ENCODE measurements at regions of chr6 and their contacts with region 1.

Region 1: DNA sequence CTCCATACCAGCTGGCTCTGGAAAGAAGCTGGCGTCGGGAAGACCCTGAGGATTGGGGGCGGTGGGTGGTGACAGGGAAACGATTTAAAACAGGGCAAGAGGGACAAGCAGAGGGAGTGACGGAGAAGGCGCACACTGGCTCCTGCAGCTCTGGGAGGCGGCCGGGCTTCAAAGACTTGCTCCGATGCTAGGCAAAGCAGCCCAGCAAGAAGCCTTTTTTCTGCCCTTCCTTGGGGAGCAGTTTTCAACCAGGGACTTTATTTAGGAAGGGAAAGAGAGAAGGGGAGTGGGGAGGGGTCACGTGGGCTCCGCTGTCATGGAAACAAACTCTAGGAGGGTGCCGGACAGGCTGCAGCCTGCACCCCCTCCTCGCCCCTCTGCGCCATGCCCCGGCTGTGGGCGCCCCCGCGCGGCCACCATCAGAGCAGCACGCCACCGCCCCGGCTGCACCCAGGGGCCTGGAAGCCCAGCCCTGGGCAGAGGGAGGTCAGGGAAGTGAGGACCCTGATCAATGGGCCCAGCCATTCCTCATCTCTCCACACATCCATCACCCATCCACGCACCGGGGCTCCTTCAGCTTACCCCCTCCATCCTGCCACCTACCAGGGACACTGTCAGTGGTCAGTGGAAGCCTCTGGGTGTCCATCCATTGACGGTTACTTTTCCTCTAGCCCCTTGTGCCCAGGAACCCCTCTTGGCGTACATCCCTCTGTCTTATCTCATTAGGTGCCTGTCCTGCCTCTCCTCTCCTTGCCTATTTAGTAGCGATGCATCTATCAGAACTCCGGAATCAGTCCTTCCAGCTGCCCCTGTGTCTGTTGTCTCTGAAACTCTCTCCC is 66.6 kb upstream of the CCDC167 start:
- DNase-seq: peak; percentile 89
- CTCF ChIP-seq: peak; percentile 97

Region 2: GRCh38 chr6:37365762-37366161 is 200.6 kb before region 1 on chr6:
- CTCF ChIA-PET with region 1: interaction called, 10 read pairs
- POLR2A ChIA-PET with region 1: no interaction called
- DNase-seq: no peak
- CTCF ChIP-seq: peak; percentile 16

Region 3: DNA sequence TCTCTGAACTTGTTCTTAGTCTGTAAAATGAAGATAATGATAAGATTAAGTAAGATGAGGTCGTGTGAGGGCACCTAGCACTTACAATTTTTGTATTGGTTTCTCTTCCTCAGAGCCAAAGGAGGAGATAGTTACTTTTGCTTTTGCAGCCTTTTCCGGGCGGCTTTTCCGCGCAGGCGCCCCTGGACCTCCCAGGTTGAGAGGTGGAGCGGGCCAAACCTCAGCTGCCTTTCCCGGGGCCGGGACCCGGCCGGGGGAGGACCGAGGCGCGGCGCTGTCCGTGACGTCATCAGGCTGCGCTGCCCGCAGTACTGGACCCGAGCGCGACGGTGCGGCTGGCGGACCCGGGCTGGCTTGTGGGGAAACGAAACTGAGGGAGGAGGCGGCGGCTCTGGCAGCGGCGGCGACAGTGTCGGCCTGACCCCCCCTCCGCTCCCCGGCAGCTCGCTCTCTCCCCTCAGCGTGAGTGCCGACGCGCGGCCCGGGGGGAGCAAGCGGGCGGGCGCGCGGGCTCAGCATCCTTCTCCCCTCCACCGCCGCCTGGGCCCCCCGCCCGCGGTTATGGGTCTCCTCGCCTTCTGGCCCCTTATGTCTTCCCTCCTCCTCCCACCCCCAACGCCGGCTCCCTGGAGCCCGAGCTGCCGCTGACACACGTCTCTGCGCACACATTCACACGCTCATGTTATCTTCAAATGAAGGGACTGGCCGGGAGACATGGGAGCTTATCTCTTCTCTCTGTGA is 133.2 kb before region 1 on chr6 and contains the start of gene CMTR1:
- CTCF ChIA-PET with region 1: interaction called, 14 read pairs
- POLR2A ChIA-PET with region 1: no interaction called
- DNase-seq: peak; percentile 98
- CTCF ChIP-seq: no peak

Region 4: DNA sequence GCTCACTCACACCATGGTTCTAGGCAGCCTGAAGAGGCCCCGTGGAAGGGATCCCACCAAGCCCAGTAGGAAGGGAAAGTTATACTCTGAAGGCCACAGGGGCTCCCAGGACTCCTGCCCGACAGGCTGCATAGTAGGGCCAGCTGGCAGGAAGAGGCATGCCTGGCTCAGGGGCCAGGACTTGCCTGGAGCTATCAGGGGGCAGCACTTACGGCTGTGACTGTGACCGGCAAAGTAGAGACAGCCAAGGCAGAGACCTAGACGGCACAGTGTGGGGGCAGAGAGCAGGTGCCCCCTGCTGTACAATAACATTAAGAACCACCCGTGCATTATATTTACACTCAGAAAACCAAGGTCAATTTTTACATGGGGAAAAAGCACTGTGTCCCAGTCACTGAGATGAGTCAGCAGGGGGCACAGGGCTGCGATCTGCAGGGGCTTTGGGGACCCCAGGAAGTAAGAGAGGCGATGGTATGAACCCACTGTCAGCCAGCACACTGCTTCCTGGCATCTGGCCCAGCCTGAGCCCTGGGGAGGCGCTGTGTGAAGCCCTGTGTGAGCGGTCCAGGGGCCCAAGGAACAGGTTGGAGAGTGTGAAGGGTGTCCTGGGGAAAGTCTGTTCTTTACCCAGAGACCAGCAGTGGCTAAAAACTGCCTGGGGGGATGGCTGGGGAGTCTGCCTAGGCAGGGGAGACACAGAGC is 76.5 kb before region 1 on chr6:
- CTCF ChIA-PET with region 1: interaction called, 19 read pairs
- POLR2A ChIA-PET with region 1: interaction called, 4 read pairs
- DNase-seq: no peak
- CTCF ChIP-seq: peak; percentile 4

Region 5: DNA sequence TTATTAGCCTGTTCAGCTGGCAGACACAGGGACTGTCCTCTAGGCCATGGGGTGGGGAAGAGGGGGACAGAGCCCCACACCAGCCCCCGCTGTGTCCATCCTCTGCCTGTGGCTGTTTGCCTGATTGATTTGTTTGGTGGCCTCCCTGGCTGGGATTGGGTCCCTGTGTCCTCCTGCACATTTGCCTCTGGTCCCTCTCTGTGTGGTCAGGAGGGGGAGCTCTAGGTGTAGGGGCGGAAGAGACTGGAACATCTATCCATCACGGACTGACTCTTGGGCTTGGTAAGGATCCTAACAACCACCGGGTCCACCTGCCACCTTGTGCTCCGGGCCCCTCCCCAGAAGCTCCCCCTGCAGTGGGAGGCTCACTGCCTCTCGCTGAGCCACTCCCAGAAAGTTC is 28.2 kb before region 1 on chr6:
- CTCF ChIA-PET with region 1: interaction called, 263 read pairs
- POLR2A ChIA-PET with region 1: interaction called, 4 read pairs
- DNase-seq: peak; percentile 69
- CTCF ChIP-seq: peak; percentile 77

Region 6: GRCh38 chr6:37576336-37576813 is 10.0 kb after region 1 on chr6:
- CTCF ChIA-PET with region 1: interaction called, 33 read pairs
- POLR2A ChIA-PET with region 1: no interaction called
- DNase-seq: no peak
- CTCF ChIP-seq: no peak

Region 7: GRCh38 chr6:37643851-37644672 is 77.7 kb after region 1 on chr6:
- CTCF ChIA-PET with region 1: no interaction called
- POLR2A ChIA-PET with region 1: no interaction called
- DNase-seq: no peak
- CTCF ChIP-seq: no peak

Region 8: DNA sequence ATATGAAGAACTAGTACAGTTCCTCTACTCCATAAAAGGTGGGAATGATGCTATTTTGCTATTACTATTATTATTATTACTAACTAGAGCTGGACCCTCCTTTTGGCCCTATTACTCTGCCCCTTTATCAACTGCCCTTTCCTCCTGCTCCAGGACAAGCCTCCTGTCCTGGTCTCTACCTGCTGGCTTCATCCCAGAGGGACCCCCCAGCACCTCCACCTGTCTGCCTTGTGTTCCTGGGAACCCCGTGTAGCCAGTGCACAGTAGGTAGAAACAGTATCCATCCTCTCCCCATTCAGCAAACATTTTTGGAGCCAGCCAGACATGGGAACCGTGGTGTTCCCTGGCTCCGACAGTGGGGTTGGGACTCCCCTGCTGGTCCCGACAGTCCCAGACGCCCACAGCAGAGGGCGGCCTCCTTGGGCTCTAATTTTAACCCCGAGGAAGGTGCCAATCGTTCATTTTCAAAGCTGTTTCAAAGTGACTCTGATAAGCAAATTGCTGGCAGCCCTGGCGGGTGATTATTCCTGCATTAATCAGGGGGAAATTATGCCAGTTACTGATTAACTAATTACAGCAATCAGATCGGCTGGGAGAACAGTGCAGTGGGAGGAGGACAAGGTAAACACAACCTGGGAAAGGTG is 175.5 kb after region 1 on chr6:
- CTCF ChIA-PET with region 1: no interaction called
- POLR2A ChIA-PET with region 1: no interaction called
- DNase-seq: no peak
- CTCF ChIP-seq: peak; percentile 30